ENCODE measurements at regions of chr11 and their contacts with region 1.

Region 1: GRCh38 chr11:103682318-103683184 is 353.9 kb upstream of the DDI1 start:
- DNase-seq: peak; percentile 30 to 91 (median 60)

Region 2: GRCh38 chr11:103537904-103538502 is 144.5 kb before region 1 on chr11:
- intact Hi-C with region 1: no loop called
- DNase-seq: no peak

Region 3: DNA sequence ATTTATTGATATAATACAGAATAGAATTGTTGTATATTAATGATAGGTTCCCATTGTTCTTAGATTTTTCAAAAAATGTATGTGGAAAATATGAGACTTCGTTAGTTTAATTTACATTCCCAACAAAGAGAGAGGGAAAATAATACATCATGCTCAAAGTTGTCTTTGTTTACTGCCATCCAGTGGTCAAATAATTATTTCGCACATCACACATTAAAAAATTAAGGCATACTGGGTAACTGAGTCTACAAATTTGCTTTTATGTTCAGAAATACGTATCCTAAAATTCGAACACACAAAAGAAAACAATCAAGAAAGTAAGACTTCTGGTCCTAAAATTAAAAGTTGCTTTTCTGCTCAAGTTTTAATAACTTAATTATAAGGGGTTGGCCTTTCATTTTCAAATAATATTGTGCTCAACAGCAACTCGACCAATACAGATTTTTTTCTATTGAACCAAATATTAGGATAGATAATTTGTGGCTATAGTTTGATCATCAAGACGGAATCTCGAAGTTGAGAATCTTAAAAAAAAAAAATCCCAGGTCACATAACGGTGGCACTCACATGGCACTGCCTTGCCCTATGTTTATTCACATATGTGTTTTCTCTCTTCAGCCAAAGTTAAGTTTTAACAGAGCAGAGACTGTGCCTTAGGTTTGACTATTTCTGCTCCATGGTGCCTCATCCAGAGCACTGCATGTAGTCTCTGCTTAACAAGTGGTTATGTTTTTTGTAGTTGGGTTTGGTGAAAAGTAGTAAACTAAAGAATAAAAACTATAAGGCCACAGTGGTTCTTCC is 469.1 kb after region 1 on chr11:
- intact Hi-C with region 1: loop called (anchors 5 kb)
- DNase-seq: no peak

Measured in posterior cingulate gyrus (tissue), 11 donors.